Aorta (tissue), 5 donors: ENCODE measurements at regions of chr2 and their contacts with region 1.

Region 1: DNA sequence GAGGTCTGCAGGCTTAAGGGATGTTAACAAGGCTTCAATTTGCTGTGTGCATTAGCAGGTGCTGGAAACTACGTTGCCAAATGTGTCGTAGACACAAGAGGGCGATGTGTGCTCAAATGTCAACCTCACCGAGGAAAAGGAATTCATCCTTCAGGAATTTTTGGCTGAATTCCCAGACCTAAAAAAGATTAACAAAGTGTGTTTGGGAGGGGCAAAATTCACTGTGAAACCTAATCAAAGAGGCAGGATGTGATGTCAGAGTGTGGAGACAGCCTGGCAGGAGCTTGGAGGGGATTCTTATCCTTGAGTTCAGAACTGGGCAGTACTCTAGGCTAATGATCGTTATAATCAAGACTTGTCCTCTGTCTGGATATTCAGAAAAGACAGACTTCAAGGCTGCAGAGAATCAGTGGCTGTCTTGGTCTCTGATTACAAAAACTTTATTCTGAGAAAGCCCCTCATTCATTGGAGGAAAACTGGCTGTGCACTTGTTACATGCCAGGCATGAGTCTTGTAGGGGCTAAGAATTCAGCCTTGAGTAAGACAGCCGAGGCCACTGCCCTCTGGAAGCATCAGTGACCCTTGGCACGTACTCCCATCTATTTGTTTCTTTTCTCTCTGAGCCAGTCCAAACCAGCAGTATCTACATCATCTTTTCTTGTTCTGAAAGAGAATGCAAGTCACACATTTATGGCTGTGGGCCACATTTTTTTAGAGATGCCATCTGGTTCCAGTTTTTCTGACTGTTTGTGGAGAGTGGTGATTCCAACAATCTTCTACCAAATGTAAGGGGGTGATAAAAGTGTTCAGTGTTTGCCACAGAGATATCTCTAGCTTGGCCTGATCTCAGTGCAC is 18.7 kb upstream of the SCYGR1 start:
- DNase-seq: peak in 1 of 2 donors; percentile 67
- ATAC-seq: peak; percentile 83
- H3K4me3 ChIP-seq: no peak overlapping the region
- H3K27ac ChIP-seq: peak overlapping the region in 1 of 2 donors; percentile 23
- H3K4me1 ChIP-seq: peaks cover 0 to 3% of the 10 kb centered on the region in 2 donors
- H3K27me3 ChIP-seq: no peaks in the 10 kb centered on the region

Region 2: DNA sequence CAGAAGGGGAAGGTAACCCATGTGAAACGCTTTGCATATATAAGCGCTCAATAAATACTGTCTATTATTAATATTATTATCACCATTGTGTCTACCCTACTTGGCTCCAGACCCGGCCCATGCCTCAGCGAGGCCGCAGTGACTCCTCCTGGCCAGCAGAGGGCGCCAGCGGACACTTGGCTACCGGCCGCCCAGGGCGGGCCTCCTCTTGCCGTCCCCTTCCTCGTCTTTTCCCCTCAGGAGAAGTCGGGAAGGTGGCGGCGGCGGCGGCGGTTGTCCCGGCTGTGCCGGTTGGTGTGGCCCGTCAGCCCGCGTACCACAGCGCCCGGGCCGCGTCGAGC is 65.5 kb after region 1 on chr2 and contains the start of gene AGFG1:
- intact Hi-C with region 1: loop called (anchors 5 kb)
- DNase-seq: peak; percentile 87 to 95
- ATAC-seq: peak; percentile 95
- H3K4me3 ChIP-seq: peak within 1 kb of the TSS; percentile 85 to 98
- H3K27ac ChIP-seq: peak within 1 kb of the TSS; percentile 49 to 85
- H3K4me1 ChIP-seq: peaks cover 0 to 2% of the 10 kb centered on the region in 2 donors
- H3K27me3 ChIP-seq: no peaks in the 10 kb centered on the region
- total RNA-seq, gene AGFG1: 81.3 to 82.9 TPM

Region 3: GRCh38 chr2:227578651-227579050 is 172.2 kb after region 1 on chr2:
- intact Hi-C with region 1: no loop called
- DNase-seq: no peak
- ATAC-seq: no peak
- H3K4me3 ChIP-seq: no peak overlapping the region
- H3K27ac ChIP-seq: no peak overlapping the region
- H3K4me1 ChIP-seq: no peaks in the 10 kb centered on the region
- H3K27me3 ChIP-seq: peaks cover 0 to 1% of the 10 kb centered on the region in 2 donors

Region 4: GRCh38 chr2:227661019-227661649 is 254.7 kb after region 1 on chr2:
- intact Hi-C with region 1: loop called in 1 of 2 experiments (anchors 10 kb)
- DNase-seq: no peak
- ATAC-seq: no peak
- H3K4me3 ChIP-seq: no peak overlapping the region
- H3K27ac ChIP-seq: no peak overlapping the region
- H3K4me1 ChIP-seq: no peaks in the 10 kb centered on the region
- H3K27me3 ChIP-seq: peaks cover 0 to 1% of the 10 kb centered on the region in 2 donors

Region 5: GRCh38 chr2:227717687-227718567 is 311.5 kb after region 1 on chr2 and contains the start of gene SLC19A3:
- intact Hi-C with region 1: loop called in 1 of 2 experiments (anchors 5 kb)
- DNase-seq: peak; percentile 91 to 95
- ATAC-seq: peak; percentile 90
- H3K4me3 ChIP-seq: peak within 1 kb of the TSS; percentile 15 to 54
- H3K27ac ChIP-seq: no peak within 1 kb of the TSS
- H3K4me1 ChIP-seq: no peaks in the 10 kb centered on the region
- H3K27me3 ChIP-seq: no peaks in the 10 kb centered on the region
- total RNA-seq, gene SLC19A3: 2.8 to 5.1 TPM

Region 6: DNA sequence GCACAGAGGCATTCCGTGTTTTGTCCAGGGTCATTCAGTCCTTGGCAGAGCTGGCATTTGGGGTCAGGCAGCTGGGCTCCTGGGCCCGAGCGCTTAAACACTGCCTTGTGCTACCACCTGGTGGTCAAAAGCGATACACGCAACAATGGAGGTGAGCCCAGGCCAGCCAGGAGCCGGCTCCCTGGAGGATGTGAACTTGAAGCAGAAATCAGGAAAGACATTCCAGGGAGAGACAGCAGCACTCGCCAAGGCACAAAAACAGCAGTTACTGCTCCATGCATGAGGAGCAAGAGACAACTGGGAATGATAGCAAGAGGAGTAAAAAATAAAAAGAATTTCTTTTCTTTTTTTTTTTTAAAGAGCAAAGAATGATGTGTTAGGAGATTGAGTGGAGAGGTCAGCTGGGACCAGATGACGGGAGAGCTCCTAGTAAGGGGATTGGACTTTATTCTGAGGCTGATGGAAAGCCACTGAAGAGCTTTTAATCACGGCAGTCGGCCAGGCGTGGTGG is 360.0 kb after region 1 on chr2:
- intact Hi-C with region 1: loop called in 1 of 2 experiments (anchors 5 kb)
- DNase-seq: peak; percentile 82 to 91
- ATAC-seq: peak; percentile 94
- H3K4me3 ChIP-seq: no peak overlapping the region
- H3K27ac ChIP-seq: no peak overlapping the region
- H3K4me1 ChIP-seq: no peaks in the 10 kb centered on the region
- H3K27me3 ChIP-seq: no peaks in the 10 kb centered on the region